Head of caudate nucleus (tissue), 42 donors: ENCODE measurements at regions of chr6 and their contacts with region 1.

Region 1: DNA sequence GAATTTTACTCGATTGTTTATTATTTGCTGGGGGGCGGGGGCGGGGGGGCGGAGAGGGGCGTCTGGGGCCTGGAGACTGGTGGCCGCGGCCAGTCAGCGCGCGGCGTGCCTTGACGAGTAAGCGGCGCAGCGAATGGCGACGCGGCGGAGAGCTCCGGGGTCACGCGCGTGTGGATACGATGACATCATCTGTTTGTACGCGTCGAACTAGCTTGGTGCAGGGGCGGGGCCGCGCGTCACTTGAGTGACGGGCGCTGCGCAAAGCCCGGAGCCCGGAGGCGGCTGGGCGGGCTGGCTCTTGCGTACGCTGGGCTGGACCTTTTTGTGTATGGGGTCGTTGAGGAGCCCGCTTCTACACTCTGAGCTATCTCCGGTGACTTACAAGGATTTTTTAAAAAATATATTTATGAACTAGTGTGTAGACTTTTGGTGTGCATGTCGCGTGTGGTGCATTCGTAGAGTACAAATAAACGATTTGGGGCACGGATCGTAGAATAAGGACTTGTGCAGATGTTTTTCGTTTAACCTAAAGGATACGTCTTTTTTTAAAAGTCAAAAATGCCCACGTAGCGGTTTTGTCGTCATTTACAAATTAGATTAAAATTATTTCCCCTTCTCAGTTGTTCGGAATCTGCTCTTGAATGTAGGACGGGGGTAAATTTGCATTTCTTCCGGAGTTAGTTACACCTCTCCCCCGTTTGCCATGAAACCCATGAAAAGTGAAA is 2.2 kb upstream of the FOXO3 start:
- DNase-seq: peak; percentile 97 to 100 (median 99)

Region 2: DNA sequence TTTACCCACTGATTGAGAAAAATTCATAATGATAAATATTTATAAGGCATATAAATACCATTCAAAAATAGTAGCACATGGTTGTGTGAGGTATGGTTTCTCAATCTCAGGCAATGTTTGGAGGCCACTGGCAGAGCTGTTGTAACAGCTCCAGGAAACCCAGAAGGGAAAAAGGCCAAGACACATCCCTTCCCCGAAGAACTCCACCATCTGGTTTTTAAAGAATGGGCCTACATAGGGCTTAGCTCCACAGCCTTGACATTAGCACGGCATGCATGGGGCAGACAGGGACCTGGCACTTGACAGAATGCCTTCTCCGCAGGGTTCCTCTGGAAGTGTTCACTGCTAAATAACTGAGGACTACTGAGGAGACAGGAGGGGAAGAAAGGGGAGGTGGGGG is 13.9 kb before region 1 on chr6:
- intact Hi-C with region 1: no loop called
- DNase-seq: no peak

Region 3: DNA sequence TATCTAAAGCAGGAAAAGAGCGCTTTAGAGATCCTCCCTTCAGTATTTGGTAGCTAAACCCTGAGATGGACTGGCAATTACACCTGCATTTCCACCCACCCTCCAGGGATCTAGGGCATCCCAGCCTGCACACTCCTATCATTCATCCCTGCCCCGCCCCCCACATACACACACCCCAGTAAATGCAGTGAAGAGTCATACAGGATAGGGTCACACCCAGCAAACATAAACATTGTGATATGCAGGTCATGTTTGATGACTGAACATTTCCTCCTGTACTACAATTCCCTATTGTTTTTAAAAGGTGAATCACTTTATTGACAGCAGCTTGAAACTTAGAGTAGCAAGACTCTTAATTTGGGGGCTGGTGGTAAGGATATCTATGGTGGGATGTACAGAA is 115.1 kb after region 1 on chr6:
- intact Hi-C with region 1: loop called (anchors 10 kb)
- DNase-seq: peak in 1 of 42 donors; percentile 27

Region 4: DNA sequence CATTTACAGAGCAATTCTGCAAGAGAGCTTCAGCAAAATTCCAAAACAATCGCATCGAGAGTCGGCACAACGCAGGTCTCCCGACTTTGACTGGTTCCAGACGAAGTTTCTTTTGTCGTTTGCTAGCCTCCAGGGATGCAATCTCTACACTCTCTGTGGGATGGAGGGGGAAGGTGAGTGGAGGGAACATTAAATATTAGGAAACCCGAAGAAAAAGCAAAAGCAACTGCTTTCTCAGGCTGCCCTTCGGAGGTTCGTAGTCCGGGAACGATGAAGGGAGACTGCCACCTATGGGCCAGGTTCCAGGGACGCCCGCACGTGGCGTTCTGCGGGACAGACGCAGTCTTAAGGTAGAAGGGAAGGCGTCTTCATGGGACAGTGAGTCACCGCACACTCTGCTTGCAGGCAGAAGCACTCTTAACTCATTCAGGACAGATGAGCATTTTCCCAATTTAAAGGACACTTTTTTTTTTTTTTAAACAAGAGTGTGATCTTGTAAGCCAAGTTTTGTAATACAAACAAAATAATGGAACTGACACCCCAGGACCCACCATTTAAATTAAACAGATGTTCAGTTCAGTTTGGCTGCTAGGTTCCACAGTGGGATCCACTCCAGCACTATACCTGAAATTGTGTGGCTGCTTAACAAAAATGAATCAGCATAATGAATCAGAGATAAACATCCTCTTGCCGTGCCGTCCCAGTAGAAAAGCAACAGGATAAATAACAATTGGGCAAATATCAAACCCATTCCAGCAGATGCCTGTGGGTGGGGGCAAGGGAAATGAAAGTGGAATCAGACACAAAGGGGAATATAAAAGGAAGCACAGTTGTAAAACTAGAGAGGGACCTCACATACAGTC is 223.9 kb after region 1 on chr6:
- intact Hi-C with region 1: loop called (anchors 5 kb)
- DNase-seq: peak; percentile 79 to 94 (median 88)

Region 5: GRCh38 chr6:108848116-108848868 is 289.8 kb after region 1 on chr6 and contains the start of gene ARMC2:
- intact Hi-C with region 1: loop called (anchors 1 kb)
- DNase-seq: peak; percentile 76 to 97 (median 92)

Region 6: GRCh38 chr6:109009962-109010704 is 451.6 kb after region 1 on chr6:
- intact Hi-C with region 1: loop called (anchors 10 kb)
- DNase-seq: no peak

Region 7: GRCh38 chr6:109095027-109095834 is 536.7 kb after region 1 on chr6 and contains the start of gene CEP57L1:
- intact Hi-C with region 1: loop called (anchors 10 kb)
- DNase-seq: peak; percentile 93 to 99 (median 96)

Region 8: DNA sequence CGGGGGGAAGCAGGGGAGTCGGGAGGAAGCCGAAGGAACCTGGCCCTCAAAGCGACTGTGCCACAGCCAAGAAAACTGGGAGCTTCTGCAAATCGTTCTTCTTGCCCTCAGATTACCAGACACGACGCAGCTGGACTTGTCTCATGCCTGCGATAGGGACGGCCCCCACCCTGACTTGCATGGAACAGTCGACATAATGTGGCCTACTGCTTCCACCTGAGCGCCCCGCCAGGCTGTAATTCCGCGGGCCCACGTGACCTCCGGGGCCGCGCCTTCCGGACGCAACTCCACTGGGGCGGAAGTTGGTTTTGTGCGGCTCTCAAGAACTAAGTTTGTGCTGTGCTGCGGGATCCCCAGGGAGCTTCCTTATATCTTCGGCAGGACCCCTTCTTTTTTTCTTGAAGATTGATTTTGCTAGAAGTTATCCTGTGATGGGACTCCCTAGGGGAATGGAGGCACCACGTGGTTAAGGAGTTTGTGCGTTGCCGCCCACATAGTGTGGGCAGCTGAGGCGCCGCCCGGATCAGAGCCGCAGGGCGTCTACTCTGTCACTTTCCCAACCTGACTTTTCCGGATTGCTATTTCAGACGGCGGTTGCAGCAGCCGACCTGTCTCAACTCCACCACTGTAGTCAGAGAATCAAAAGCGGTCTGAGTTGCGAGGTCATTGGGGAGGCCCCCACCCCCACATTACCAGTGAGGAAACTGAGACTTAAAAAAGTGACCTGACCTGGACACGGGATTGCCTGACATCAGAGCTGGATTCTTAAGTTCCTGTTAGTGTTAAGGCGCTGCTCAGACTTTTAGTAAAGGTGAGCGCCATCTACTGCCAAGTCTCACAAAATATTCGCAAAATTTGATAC is 824.3 kb after region 1 on chr6:
- intact Hi-C with region 1: loop called (anchors 10 kb)
- DNase-seq: peak; percentile 81 to 95 (median 90)